HepG2 (cell line): ENCODE measurements at regions of chr12 and their contacts with region 1.

Region 1: GRCh38 chr12:120978296-120979219 is at the start of gene HNF1A:
- DNase-seq: peak; percentile 95
- ATAC-seq: peak; percentile 70
- H3K4me3 ChIP-seq: peak within 1 kb of the TSS; percentile 90 to 98 (median 98)
- H3K27ac ChIP-seq: peak within 1 kb of the TSS; percentile 100
- H3K4me1 ChIP-seq: peaks cover 60% of the 10 kb centered on the region
- H3K27me3 ChIP-seq: no peaks in the 10 kb centered on the region; a peak in 1 of 5 replicates
- CTCF ChIP-seq: no peak
- EP300 ChIP-seq: peak; percentile 75 to 94; a peak in 3 of 4 replicates
- POLR2A ChIP-seq: peak; percentile 37 to 41; a peak in 2 of 4 replicates
- RAD21 ChIP-seq: peak; percentile 28; the same call in 1 of the 2 replicates
- total RNA-seq, gene HNF1A: 27.0 and 34.7 TPM in 2 replicates

Region 2: DNA sequence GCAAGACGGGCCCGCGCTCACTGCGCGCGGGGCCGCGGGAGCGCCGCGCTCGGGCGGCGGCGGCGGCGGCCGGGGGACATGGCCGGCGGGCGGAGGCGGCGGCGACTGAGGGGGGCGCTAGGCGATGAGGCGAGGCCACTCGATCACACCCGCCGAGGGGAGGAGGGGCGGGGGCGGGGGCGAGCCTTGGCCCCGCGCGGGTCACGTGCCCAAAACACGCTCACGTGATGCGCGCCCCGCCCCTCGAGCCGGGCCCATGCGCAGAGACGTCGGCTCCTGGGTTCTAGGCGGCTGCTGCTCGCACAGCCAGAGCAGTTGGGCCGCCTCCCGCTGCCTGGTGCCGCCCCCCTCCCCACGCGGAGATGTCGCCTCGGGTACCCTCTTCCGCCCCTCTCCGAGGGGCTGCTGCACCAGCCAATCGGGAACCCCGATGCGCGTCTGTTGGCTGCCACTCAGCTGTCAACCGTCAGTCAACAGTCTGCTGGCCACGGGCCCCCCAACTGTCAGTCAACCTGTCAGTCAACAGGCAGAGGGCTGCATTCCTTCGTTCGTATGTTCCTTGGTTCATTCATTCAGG is 74.3 kb before region 1 on chr12 and contains the start of gene SPPL3:
- CTCF ChIA-PET with region 1: no interaction called
- POLR2A ChIA-PET with region 1: interaction called, 12 read pairs
- in situ Hi-C with region 1: no loop called
- intact Hi-C with region 1: loop called (anchors 10 kb)
- DNase-seq: peak; percentile 75
- ATAC-seq: peak; percentile 63
- H3K4me3 ChIP-seq: peak within 1 kb of the TSS; percentile 96 to 98 (median 97)
- H3K27ac ChIP-seq: peak within 1 kb of the TSS; percentile 74
- H3K4me1 ChIP-seq: peaks cover 53% of the 10 kb centered on the region
- H3K27me3 ChIP-seq: peaks cover 0 to 4% of the 10 kb centered on the region in 2 experiments; a peak in 1 of 5 replicates
- CTCF ChIP-seq: peak; percentile 48
- EP300 ChIP-seq: no peak
- POLR2A ChIP-seq: peak; percentile 27 to 57; a peak in 2 of 4 replicates
- RAD21 ChIP-seq: peak; percentile 6; the same call in 1 of the 2 replicates
- total RNA-seq, gene SPPL3: 6.6 and 9.1 TPM in 2 replicates

Region 3: DNA sequence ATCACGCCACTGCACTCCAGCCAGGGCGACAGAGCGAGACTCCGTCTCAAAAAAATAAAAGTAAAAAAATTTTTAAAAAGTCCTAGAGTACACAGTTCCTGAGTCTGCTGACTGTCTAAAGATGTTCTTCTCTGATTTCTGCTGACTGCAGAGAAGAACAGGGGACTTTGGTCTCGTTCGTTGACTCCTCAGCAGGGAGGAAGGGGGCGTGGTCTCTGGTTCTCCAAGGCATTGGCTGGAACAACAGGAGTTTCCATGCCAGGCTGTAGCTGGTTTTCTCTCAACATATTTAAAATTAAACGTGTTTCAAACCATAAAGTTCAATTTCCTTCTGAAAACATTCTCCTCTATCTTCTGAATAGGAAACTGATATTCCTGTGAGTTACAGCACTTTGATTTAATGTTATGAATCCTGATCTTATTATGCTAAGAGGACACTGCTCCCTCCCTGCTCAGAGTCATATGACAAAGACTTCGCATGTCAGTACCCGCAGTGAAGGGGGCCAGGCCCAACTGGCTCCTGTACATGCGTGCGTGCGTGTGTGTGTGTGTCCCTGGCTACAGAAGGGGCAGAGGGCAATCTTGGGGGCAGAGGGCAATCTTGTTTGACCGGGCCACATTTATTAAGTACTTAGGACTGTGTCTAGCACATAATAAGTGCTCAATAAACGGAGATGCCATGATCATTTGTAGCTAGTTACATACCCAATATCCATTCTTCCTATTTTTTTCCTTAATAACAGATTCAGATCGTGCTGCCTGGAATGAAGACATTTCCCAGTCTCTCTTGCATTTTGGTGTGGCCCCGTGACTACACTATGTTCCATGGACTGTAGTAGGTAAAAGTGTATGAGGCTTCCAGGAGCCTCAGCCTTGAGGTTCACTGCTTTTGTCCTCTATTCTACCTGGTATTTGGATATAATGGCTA is 16.7 kb before region 1 on chr12:
- CTCF ChIA-PET with region 1: no interaction called
- POLR2A ChIA-PET with region 1: interaction called, 176 read pairs
- in situ Hi-C with region 1: no loop called
- intact Hi-C with region 1: no loop called
- DNase-seq: no peak
- ATAC-seq: peak; percentile 30
- H3K4me3 ChIP-seq: peak overlapping the region in 2 of 3 experiments; percentile 7 to 20; a peak in 1 of 6 replicates
- H3K27ac ChIP-seq: peak overlapping the region; percentile 28
- H3K4me1 ChIP-seq: peaks cover 55% of the 10 kb centered on the region
- H3K27me3 ChIP-seq: no peaks in the 10 kb centered on the region
- CTCF ChIP-seq: no peak
- EP300 ChIP-seq: no peak
- POLR2A ChIP-seq: peak; percentile 44 to 52; a peak in 2 of 4 replicates
- RAD21 ChIP-seq: no peak

Region 4: DNA sequence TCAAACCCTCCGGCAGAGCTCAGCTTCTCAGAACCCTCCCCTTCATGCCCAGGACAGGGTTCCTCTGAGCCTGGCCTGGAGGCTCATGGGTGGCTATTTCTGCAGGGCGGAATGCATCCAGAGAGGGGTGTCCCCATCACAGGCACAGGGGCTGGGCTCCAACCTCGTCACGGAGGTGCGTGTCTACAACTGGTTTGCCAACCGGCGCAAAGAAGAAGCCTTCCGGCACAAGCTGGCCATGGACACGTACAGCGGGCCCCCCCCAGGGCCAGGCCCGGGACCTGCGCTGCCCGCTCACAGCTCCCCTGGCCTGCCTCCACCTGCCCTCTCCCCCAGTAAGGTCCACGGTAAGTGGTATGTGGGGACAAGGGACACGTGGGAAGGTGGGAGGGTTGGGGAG is 15.5 kb after region 1 on chr12:
- CTCF ChIA-PET with region 1: no interaction called
- POLR2A ChIA-PET with region 1: interaction called, 56 read pairs
- in situ Hi-C with region 1: no loop called
- intact Hi-C with region 1: no loop called
- DNase-seq: no peak
- ATAC-seq: no peak; the same call in 2 of the 3 replicates
- H3K4me3 ChIP-seq: no peak overlapping the region
- H3K27ac ChIP-seq: no peak overlapping the region
- H3K4me1 ChIP-seq: 0 out of 2 replicates have a peak, but pooled peaks cover 7% of the 10 kb centered on the region
- H3K27me3 ChIP-seq: no peaks in the 10 kb centered on the region
- CTCF ChIP-seq: no peak
- EP300 ChIP-seq: no peak
- POLR2A ChIP-seq: no peak
- RAD21 ChIP-seq: no peak

Region 5: GRCh38 chr12:120999191-121000085 is 20.9 kb after region 1 on chr12:
- CTCF ChIA-PET with region 1: no interaction called
- POLR2A ChIA-PET with region 1: interaction called, 114 read pairs
- in situ Hi-C with region 1: no loop called
- intact Hi-C with region 1: no loop called
- DNase-seq: no peak
- ATAC-seq: peak; percentile 4; the same call in 1 of the 3 replicates
- H3K4me3 ChIP-seq: no peak overlapping the region
- H3K27ac ChIP-seq: no peak overlapping the region
- H3K4me1 ChIP-seq: peaks cover 16% of the 10 kb centered on the region; the same call in 1 of the 2 replicates
- H3K27me3 ChIP-seq: no peaks in the 10 kb centered on the region
- CTCF ChIP-seq: no peak
- EP300 ChIP-seq: no peak
- POLR2A ChIP-seq: peak in 1 of 2 experiments; percentile 32; a peak in 1 of 4 replicates
- RAD21 ChIP-seq: no peak

Region 6: GRCh38 chr12:121026274-121027045 is 47.9 kb after region 1 on chr12:
- CTCF ChIA-PET with region 1: no interaction called
- POLR2A ChIA-PET with region 1: interaction called, 33 read pairs
- in situ Hi-C with region 1: no loop called
- intact Hi-C with region 1: no loop called
- DNase-seq: peak; percentile 91
- ATAC-seq: peak; percentile 87
- H3K4me3 ChIP-seq: peak overlapping the region in 1 of 3 experiments; percentile 54; a peak in 2 of 6 replicates
- H3K27ac ChIP-seq: peak overlapping the region; percentile 89
- H3K4me1 ChIP-seq: peaks cover 65% of the 10 kb centered on the region
- H3K27me3 ChIP-seq: peaks cover 0 to 3% of the 10 kb centered on the region in 2 experiments; a peak in 1 of 5 replicates
- CTCF ChIP-seq: peak; percentile 73
- EP300 ChIP-seq: no peak
- POLR2A ChIP-seq: no peak
- RAD21 ChIP-seq: peak; percentile 23; the same call in 1 of the 2 replicates